K562 (cell line): ENCODE measurements at regions of chr1 and their contacts with region 1.

Region 1: DNA sequence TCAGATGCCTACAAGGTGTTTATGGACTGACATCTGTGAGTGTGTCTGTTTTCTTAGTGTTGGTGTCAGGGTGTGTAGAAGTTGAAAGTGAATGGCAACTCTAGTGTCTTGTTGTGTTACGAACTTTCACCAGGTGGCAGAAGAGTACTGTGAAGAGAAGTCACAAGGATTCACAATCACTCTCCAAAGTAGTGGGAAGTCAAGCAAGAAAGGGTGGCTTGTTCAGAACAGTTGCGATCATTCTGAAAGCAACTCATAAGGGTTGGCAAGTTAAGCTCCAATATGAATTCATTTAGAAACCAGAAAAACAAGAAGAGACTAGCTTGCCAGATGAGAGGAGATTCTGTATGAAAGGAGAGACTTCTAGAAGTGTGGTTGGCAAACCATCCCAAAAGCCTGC is 86.1 kb downstream of the FASLG start:
- DNase-seq: peak; percentile 28 to 71 (median 39)
- ATAC-seq: peak; percentile 90
- H3K4me3 ChIP-seq: no peak overlapping the region
- H3K27ac ChIP-seq: no peak overlapping the region
- H3K4me1 ChIP-seq: peaks cover 3 to 7% of the 10 kb centered on the region in 2 experiments; a peak in 3 of 5 replicates
- H3K27me3 ChIP-seq: no peaks in the 10 kb centered on the region; a peak in 1 of 5 replicates
- CTCF ChIP-seq: peak; percentile 69 to 88 (median 70)
- EP300 ChIP-seq: no peak
- POLR2A ChIP-seq: no peak
- RAD21 ChIP-seq: peak; percentile 99

Region 2: GRCh38 chr1:172630056-172630818 is 114.8 kb before region 1 on chr1:
- CTCF ChIA-PET with region 1: no interaction called
- POLR2A ChIA-PET with region 1: no interaction called
- in situ Hi-C with region 1: no loop called
- intact Hi-C with region 1: no loop called
- DNase-seq: no peak
- ATAC-seq: no peak
- H3K4me3 ChIP-seq: no peak overlapping the region
- H3K27ac ChIP-seq: no peak overlapping the region
- H3K4me1 ChIP-seq: no peaks in the 10 kb centered on the region; a peak in 1 of 5 replicates
- H3K27me3 ChIP-seq: no peaks in the 10 kb centered on the region
- CTCF ChIP-seq: no peak
- EP300 ChIP-seq: no peak
- POLR2A ChIP-seq: no peak
- RAD21 ChIP-seq: no peak

Region 3: GRCh38 chr1:172733815-172734214 is 11.2 kb before region 1 on chr1:
- CTCF ChIA-PET with region 1: no interaction called
- POLR2A ChIA-PET with region 1: no interaction called
- in situ Hi-C with region 1: no loop called
- intact Hi-C with region 1: no loop called
- DNase-seq: no peak
- ATAC-seq: no peak
- H3K4me3 ChIP-seq: no peak overlapping the region
- H3K27ac ChIP-seq: no peak overlapping the region
- H3K4me1 ChIP-seq: no peaks in the 10 kb centered on the region
- H3K27me3 ChIP-seq: no peaks in the 10 kb centered on the region
- CTCF ChIP-seq: no peak
- EP300 ChIP-seq: no peak
- POLR2A ChIP-seq: no peak
- RAD21 ChIP-seq: no peak

Region 4: DNA sequence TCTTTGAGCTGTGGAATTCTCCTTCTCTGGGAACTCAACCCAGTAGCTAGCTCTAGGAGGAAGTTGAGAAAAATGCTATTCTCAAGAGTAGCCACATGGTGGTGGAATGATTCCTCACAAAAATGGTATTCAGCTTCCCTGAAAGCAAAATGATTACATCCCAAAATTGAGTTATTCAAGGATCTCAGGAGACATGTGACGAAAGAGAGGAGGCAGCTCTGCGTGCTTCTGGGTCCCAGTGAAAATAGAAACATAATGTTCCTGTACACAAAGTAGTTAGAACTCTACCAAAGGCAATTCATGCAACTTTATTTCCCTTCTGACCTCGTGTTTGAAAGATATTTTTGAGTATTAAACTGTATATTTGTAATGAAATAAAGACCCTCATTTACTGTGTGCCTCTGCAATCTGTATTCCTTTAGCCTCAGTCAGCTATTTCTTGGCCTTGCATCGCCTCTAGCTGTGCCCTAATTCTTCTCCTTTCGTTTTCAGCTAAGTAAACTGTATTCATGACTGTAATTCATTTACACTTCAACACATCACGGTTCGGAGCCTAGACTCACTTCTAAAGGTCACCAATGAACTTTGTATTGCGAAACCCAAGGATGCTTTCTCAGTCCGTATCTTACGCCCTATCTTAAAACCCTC is 81.2 kb after region 1 on chr1:
- CTCF ChIA-PET with region 1: interaction called, 4 read pairs
- POLR2A ChIA-PET with region 1: no interaction called
- in situ Hi-C with region 1: no loop called
- intact Hi-C with region 1: loop called (anchors 2 kb)
- DNase-seq: peak in 2 of 4 experiments; percentile 22 to 35
- ATAC-seq: peak; percentile 79
- H3K4me3 ChIP-seq: no peak overlapping the region
- H3K27ac ChIP-seq: no peak overlapping the region
- H3K4me1 ChIP-seq: peaks cover 0 to 11% of the 10 kb centered on the region in 2 experiments; a peak in 3 of 5 replicates
- H3K27me3 ChIP-seq: no peaks in the 10 kb centered on the region
- CTCF ChIP-seq: peak; percentile 50 to 75 (median 64); a peak in 5 of 6 replicates
- EP300 ChIP-seq: no peak
- POLR2A ChIP-seq: no peak
- RAD21 ChIP-seq: peak; percentile 92 to 96

Region 5: DNA sequence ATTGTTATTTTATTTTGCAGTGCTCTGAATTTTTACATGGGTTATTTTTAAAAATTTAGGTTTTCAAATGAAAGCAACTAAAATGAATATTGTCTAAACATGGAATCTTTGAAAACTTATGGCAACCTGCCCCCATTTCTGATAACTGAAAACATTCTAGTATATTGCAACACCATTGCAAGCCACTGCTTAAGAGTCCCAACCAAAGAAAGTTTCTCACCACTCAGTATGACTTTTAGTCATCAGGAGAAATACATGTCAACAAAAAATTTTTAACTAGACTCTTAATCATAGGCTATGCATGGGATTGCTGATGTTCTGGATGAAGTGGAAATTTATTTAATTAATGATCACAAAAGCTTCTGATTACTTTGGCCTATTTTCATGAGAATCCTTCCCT is 193.7 kb after region 1 on chr1:
- CTCF ChIA-PET with region 1: no interaction called
- POLR2A ChIA-PET with region 1: no interaction called
- in situ Hi-C with region 1: no loop called
- intact Hi-C with region 1: loop called (anchors 10 kb)
- DNase-seq: no peak
- ATAC-seq: no peak
- H3K4me3 ChIP-seq: no peak overlapping the region
- H3K27ac ChIP-seq: no peak overlapping the region
- H3K4me1 ChIP-seq: peaks cover 0 to 12% of the 10 kb centered on the region in 2 experiments; a peak in 3 of 5 replicates
- H3K27me3 ChIP-seq: no peaks in the 10 kb centered on the region
- CTCF ChIP-seq: no peak
- EP300 ChIP-seq: no peak
- POLR2A ChIP-seq: no peak
- RAD21 ChIP-seq: no peak

Region 6: DNA sequence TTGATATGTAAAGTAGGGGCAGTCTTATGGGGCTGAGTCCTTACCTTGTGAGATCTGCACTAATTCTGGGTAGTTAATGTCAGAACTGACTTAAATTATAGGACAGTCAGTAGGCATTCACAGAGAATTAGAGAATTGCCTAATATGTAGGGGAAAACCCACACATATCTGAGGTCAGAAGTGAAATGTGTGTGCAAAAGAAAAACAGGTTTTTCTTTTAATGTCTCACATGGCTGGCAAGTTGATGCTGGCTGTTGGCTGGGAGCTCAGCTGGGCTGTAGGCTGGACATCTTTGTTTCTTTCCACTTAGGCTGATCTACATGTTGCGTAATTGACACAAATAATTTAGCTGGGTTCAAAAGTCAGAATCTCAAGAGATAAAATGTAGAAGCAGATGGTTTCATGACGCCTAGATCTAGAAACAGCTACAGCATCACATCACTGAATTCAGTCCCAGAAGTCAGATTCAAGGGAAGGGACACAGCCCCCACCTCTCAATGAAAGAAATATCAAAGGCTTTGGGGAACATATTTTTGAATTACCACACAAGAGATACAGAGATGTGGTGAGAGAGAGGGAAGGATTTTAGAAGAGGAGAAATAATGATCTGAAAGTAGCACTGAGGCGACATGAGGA is 206.8 kb after region 1 on chr1:
- CTCF ChIA-PET with region 1: no interaction called
- POLR2A ChIA-PET with region 1: no interaction called
- in situ Hi-C with region 1: no loop called
- intact Hi-C with region 1: no loop called
- DNase-seq: no peak
- ATAC-seq: no peak
- H3K4me3 ChIP-seq: no peak overlapping the region
- H3K27ac ChIP-seq: no peak overlapping the region
- H3K4me1 ChIP-seq: no peaks in the 10 kb centered on the region
- H3K27me3 ChIP-seq: no peaks in the 10 kb centered on the region
- CTCF ChIP-seq: no peak
- EP300 ChIP-seq: no peak
- POLR2A ChIP-seq: no peak
- RAD21 ChIP-seq: no peak